ENCODE measurements at regions of chr14 and their contacts with region 1.

Region 1: DNA sequence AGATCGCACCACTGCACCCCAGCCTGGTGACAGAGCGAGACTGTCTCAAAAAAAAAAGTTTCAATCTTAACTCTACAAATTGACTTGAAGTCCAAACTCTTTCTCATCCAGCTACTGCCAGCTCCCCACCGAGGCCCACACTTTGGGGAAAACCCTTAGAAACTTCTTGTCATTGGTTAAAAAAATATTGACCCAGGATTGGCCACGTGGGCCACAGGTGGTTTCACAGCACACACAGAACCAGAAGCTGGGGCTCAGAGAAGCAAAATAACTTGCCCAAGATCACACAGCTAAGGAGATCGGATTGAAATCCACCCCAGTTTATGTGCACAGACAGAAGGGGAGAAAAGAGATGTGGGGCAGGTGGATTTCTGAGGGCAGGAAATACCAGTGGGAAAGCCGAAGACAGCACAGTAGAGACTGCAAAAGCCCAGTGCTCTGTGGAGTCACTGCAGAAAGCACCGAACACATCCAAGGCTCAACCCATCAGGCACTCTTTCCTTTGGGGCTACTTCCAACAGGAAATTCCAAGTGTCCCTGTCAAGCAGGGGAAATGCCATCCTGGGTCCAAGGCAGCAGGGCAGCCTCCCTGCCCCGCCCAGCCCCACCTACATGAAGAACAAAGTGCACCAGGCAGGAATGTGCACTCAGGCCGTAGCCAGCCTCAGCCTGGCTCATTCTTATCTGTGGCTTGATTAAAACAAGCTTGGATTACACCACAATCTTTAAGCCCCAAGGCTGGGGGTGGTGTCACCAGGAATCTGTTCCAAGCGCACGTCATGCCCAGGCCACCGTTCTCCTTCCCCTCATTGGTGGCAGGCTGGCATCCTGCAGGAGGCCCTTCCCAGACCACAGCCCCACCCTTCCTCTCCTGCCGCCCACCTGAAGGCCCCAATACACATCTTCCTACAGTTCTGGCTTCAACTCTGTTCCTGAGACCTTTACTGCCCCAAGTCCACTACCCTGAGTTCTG is 72.5 kb downstream of the ITPK1 start:
- DNase-seq: peak; percentile 76
- ATAC-seq: peak; percentile 76

Region 2: DNA sequence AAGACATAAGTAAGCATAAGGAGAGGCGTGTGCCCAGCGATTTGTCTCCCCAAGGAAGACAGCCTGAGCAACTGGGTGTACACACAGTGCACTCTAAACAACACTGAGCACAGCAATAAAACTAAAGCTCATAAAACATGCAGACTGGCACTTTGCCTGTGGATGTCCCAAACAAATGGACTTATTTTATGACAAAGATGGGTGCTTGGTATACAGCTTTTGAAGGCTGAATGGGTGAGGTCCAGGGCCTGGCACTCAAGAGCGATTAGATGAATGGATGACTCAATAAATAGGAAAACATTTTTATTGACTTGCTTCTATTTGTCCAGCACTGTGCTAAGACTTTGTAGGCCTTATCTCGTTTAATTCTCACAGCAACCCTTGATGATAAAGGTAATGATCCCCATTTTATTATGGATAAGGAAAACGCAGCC is 323.3 kb before region 1 on chr14:
- intact Hi-C with region 1: no loop called
- DNase-seq: no peak
- ATAC-seq: peak; percentile 16 to 33

Region 3: DNA sequence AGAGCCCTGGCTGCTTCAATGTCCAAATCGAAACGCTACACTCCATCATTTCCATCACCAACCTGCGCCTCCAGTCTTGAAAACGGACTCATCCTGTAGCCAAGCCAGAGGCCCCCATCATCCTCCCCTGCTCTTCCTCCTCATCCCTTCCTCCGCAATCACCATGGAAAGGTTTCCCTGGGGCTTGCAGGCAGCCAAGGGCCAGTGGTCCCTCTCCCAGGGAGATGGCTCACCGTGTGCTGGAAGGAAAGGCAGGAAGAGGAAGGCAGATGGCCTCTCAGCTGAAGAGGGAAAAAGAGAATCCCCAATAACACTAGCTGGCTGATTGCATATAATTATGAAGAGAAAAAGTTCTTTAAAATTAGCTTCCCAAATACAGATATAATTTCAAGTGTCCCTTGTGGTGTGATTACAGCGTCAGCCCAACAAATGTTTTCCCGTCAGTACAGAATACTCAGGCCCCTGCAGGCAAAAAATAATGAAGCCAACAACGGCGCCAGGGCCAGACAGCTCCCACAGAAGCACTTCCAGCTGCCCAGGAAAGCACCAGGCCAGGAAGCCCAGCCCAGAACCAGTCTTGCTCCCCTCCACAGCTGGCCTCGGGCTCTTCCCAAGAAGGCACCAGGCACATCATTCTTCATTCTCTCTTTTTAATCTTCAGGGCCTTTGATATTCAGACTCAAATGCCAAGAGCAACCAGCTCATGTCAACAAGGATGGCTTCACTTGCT is 47.7 kb after region 1 on chr14:
- intact Hi-C with region 1: loop called in 1 of 2 experiments (anchors 10 kb)
- DNase-seq: peak; percentile 64
- ATAC-seq: peak; percentile 50 to 75

Region 4: GRCh38 chr14:93137864-93138263 is 94.6 kb after region 1 on chr14:
- intact Hi-C with region 1: no loop called
- DNase-seq: peak; percentile 51
- ATAC-seq: peak; percentile 60 to 71